Naive thymus-derived CD8-positive, alpha-beta T cell (primary cell): ENCODE measurements at regions of chr20 and their contacts with region 1.

Region 1: GRCh38 chr20:2651772-2652723 is at the start of gene NOP56:
- DNase-seq: peak; percentile 90 to 99 (median 95)
- ATAC-seq: peak; percentile 84 to 87
- H3K4me3 Mint-ChIP-seq: peak within 1 kb of the TSS; percentile 84 to 94 (median 89)
- H3K27ac Mint-ChIP-seq: peak within 1 kb of the TSS; percentile 81 to 95 (median 91)
- H3K4me1 Mint-ChIP-seq: peaks cover 7 to 45% (median 36%) of the 10 kb centered on the region in 4 donors
- H3K27me3 Mint-ChIP-seq: no peaks in the 10 kb centered on the region
- polyA plus RNA-seq, gene NOP56: 72.3 to 115 (median 107) TPM

Region 2: GRCh38 chr20:2335096-2335870 is 316.8 kb before region 1 on chr20:
- POLR2A ChIA-PET with region 1: no interaction called
- DNase-seq: peak in 1 of 10 donors; percentile 2
- ATAC-seq: no peak
- H3K4me3 Mint-ChIP-seq: no peak overlapping the region
- H3K27ac Mint-ChIP-seq: no peak overlapping the region
- H3K4me1 Mint-ChIP-seq: peaks cover 0 to 1% (median 0%) of the 10 kb centered on the region in 4 donors
- H3K27me3 Mint-ChIP-seq: peaks cover 3 to 17% (median 4%) of the 10 kb centered on the region in 5 donors

Region 3: GRCh38 chr20:2470423-2471193 is 181.4 kb before region 1 on chr20 and contains the start of gene SNRPB:
- POLR2A ChIA-PET with region 1: interaction called, 21 read pairs
- DNase-seq: peak; percentile 85 to 98 (median 96)
- ATAC-seq: peak; percentile 90
- H3K4me3 Mint-ChIP-seq: peak within 1 kb of the TSS; percentile 94 to 99 (median 99)
- H3K27ac Mint-ChIP-seq: peak within 1 kb of the TSS; percentile 94 to 100 (median 99)
- H3K4me1 Mint-ChIP-seq: peaks cover 31 to 49% (median 41%) of the 10 kb centered on the region in 4 donors
- H3K27me3 Mint-ChIP-seq: no peaks in the 10 kb centered on the region
- polyA plus RNA-seq, gene SNRPB: 218 to 245 (median 240) TPM

Region 4: GRCh38 chr20:2523919-2524708 is 127.9 kb before region 1 on chr20:
- POLR2A ChIA-PET with region 1: interaction called, 12 read pairs
- DNase-seq: peak; percentile 80 to 96 (median 92)
- ATAC-seq: peak; percentile 85 to 88
- H3K4me3 Mint-ChIP-seq: peak overlapping the region; percentile 85 to 94 (median 90)
- H3K27ac Mint-ChIP-seq: peak overlapping the region; percentile 72 to 92 (median 86)
- H3K4me1 Mint-ChIP-seq: peaks cover 9 to 24% (median 17%) of the 10 kb centered on the region in 4 donors
- H3K27me3 Mint-ChIP-seq: peaks cover 0 to 2% (median 0%) of the 10 kb centered on the region in 5 donors

Region 5: DNA sequence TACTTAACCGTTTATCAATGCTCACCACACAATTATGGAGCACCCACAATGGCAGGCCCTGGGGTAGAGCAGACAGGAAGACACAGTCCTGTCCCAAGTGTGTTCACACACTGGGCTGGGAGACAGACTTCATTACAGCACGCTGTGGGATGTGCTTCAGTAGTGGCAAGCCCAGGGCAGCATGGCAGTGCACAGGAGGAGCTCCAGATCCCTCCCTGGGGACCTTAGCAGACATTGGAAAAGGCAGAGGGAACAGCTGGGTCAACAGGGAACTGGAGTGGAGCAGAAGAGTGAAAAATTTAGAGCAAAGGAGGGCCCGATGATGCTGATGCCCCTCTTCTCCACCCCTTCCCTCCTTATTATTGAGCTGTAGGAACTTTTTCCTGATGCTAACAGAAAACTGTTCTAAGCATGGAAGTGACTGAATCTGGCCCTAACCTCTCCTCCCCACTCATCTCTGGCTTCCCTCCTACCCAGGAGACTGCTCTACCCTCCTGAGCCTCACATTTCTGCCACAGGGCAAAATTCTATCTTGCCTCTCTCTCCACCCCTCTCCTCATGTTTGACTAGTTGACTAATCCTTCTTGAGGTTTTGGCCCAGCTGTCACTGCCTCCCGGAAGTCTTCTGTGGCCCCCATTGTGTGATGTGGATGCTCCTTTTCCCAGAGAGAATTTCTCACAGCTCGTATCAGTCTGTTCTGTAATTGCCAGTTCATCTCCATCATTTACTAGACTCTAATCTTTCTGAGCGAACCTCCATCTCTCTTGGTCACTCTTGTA is 40.9 kb before region 1 on chr20:
- POLR2A ChIA-PET with region 1: no interaction called
- DNase-seq: no peak
- ATAC-seq: no peak
- H3K4me3 Mint-ChIP-seq: no peak overlapping the region
- H3K27ac Mint-ChIP-seq: no peak overlapping the region
- H3K4me1 Mint-ChIP-seq: no peaks in the 10 kb centered on the region
- H3K27me3 Mint-ChIP-seq: peaks cover 17 to 37% (median 31%) of the 10 kb centered on the region in 5 donors

Region 6: GRCh38 chr20:2673453-2673852 is 21.4 kb after region 1 on chr20:
- POLR2A ChIA-PET with region 1: interaction called, 10 read pairs
- DNase-seq: no peak
- ATAC-seq: no peak
- H3K4me3 Mint-ChIP-seq: no peak overlapping the region
- H3K27ac Mint-ChIP-seq: no peak overlapping the region
- H3K4me1 Mint-ChIP-seq: no peaks in the 10 kb centered on the region
- H3K27me3 Mint-ChIP-seq: peaks cover 0 to 9% (median 4%) of the 10 kb centered on the region in 5 donors

Region 7: GRCh38 chr20:2713285-2713684 is 61.2 kb after region 1 on chr20:
- POLR2A ChIA-PET with region 1: no interaction called
- DNase-seq: peak in 4 of 10 donors; percentile 31 to 67 (median 56)
- ATAC-seq: peak; percentile 78 to 93
- H3K4me3 Mint-ChIP-seq: no peak overlapping the region
- H3K27ac Mint-ChIP-seq: no peak overlapping the region
- H3K4me1 Mint-ChIP-seq: peaks cover 0 to 3% (median 2%) of the 10 kb centered on the region in 4 donors
- H3K27me3 Mint-ChIP-seq: peaks cover 0 to 4% (median 0%) of the 10 kb centered on the region in 5 donors

Region 8: DNA sequence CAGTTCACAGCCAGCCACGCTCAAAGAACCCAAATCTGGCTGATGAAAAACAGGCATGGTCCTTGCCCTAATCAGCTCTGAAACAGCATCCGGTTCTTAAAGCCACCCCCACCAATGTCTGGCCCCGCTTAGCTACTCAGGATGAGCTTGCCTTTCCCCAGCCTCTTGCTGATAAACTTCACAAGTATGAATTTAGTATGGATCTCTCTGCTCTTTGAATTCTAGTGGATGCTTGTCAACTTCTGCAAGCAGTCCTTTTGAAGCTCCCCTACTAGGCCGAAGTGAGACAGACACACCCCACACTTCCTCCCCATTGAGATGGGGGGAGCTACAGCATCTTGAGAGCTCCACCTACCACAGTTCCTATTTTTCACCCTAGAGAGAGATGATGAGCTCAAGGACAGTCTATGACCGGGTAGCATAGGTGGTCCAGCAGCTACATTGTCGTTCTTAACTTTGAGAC is 77.2 kb after region 1 on chr20:
- POLR2A ChIA-PET with region 1: interaction called, 13 read pairs
- DNase-seq: peak in 8 of 10 donors; percentile 27 to 71 (median 45)
- ATAC-seq: peak; percentile 97 to 98
- H3K4me3 Mint-ChIP-seq: peak overlapping the region; percentile 58 to 83 (median 73)
- H3K27ac Mint-ChIP-seq: peak overlapping the region; percentile 20 to 97 (median 94)
- H3K4me1 Mint-ChIP-seq: peaks cover 9 to 34% (median 28%) of the 10 kb centered on the region in 4 donors
- H3K27me3 Mint-ChIP-seq: peaks cover 0 to 7% (median 0%) of the 10 kb centered on the region in 5 donors